Thyroid gland (tissue), 4 donors: ENCODE measurements at regions of chr5 and their contacts with region 1.

Region 1: GRCh38 chr5:157476702-157477408 is 16.8 kb downstream of the NIPAL4 start:
- DNase-seq: peak; percentile 33 to 43
- H3K4me3 ChIP-seq: no peak overlapping the region
- H3K27ac ChIP-seq: no peak overlapping the region
- H3K4me1 ChIP-seq: peaks cover 12 to 15% of the 10 kb centered on the region in 2 donors
- H3K27me3 ChIP-seq: no peaks in the 10 kb centered on the region
- CTCF ChIP-seq: peak; percentile 33 to 88 (median 73)
- POLR2A ChIP-seq: no peak

Region 2: DNA sequence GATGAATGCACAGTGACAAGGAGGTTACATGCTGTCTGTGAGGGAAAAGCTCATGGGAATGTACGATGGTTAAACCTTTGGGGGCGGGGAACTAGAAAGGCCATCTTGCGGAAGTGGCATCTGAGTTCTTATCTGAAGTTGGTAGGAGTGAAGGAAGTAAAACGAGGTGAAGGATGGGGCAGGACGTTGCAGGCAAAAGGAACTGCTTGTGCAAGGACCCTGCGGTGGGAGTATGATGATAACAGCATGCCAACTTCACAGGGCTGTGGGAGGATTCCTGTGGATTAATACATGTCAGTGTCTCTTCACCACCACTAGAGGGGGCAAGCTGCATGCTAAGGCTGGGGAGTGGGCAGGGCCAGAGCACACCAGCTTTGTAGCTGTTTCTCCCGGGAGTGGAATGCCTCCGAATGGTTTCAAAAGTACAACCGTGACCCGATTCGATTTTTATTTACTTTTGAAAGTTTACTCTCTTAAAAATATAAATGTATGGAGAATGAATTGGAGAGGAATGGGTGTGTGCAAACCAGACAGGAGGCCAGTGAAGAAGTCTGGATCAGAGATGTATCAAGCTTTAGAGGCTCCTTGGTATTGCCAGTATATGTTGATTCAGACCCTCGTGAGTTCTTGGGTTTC is 148.5 kb before region 1 on chr5:
- intact Hi-C with region 1: loop called (anchors 5 kb)
- DNase-seq: peak; percentile 66 to 71
- H3K4me3 ChIP-seq: no peak overlapping the region
- H3K27ac ChIP-seq: no peak overlapping the region
- H3K4me1 ChIP-seq: no peaks in the 10 kb centered on the region
- H3K27me3 ChIP-seq: no peaks in the 10 kb centered on the region
- CTCF ChIP-seq: peak; percentile 50 to 93 (median 86)
- POLR2A ChIP-seq: no peak

Region 3: GRCh38 chr5:157366741-157367674 is 109.8 kb before region 1 on chr5:
- intact Hi-C with region 1: loop called (anchors 10 kb)
- DNase-seq: peak; percentile 61 to 63
- H3K4me3 ChIP-seq: no peak overlapping the region
- H3K27ac ChIP-seq: peak overlapping the region; percentile 15 to 54 (median 44)
- H3K4me1 ChIP-seq: peaks cover 6 to 11% of the 10 kb centered on the region in 2 donors
- H3K27me3 ChIP-seq: no peaks in the 10 kb centered on the region
- CTCF ChIP-seq: peak in 4 of 6 experiments; percentile 44 to 67 (median 56)
- POLR2A ChIP-seq: no peak

Region 4: DNA sequence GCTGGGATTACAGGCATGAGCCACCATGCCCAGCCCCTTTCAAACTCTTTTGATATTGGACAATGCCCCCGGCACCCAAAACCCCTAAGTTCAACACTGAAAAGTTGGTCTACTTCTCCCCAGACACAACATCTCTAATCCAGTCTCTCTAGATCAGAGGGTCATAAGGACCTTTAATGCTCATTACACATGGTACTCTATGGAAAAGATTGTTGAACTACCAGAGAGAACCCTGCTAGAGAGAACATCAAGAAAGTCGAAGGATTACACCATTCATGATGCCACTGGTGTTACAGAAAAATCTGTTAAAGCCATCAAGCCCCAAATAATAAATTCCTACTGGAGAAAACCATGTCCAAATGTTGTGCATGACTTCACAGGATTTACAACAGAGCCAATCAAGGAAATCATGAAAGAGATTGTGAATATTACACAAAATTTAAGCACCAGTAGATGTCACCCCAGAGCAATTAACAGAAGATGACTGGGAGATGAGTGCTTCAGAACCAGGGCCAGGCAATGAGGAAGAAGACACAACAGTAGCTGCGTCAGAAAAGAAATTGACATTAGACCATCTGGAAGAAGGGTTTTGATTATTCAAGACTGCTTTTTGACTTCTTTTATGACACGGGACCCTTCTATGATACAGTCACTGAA is 45.2 kb before region 1 on chr5:
- intact Hi-C with region 1: loop called (anchors 2 kb)
- DNase-seq: peak; percentile 20 to 35
- H3K4me3 ChIP-seq: no peak overlapping the region
- H3K27ac ChIP-seq: no peak overlapping the region
- H3K4me1 ChIP-seq: no peaks in the 10 kb centered on the region
- H3K27me3 ChIP-seq: no peaks in the 10 kb centered on the region
- CTCF ChIP-seq: peak in 4 of 6 experiments; percentile 58 to 77 (median 66)
- POLR2A ChIP-seq: no peak

Region 5: DNA sequence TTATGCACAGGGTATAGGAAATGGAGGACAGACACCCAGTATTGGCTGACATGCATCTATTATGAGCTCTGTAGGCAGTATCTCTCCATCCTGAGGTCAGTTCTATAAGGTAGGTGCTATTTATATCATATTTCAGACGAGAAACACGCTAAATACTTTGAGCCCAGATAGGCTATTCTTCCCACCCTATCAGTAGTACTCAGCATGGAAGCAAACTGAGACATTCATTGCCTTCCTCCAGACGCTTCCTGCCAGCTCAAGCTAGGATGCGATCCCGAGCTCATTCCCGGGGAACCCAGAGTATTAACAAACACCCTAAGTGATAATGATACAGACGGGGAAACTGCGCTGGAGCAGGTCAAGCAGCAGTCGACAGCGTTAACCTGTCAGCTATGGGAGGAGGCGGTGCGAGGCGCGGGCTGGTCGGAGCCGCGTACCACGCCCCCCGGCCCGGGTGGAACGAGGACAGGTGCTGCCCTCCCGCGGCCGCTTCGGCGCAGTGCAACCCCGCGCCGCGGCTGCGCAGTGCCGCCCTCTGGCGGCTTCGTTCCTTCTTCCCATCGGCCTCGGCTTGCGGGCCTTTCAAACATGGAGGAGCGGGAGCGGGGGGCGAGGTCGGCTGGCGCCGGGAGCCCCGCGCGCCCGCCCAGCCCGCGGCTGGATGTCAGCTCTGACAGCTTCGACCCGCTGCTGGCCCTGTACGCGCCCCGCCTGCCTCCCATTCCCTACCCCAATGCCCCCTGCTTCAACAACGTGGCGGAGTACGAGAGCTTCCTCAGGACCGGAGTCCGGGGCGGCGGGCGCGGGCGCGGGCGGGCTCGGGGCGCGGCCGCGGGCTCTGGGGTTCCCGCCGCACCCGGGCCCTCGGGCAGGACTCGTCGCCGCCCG is 266.6 kb after region 1 on chr5 and contains the start of gene LSM11:
- intact Hi-C with region 1: loop called (anchors 10 kb)
- DNase-seq: peak; percentile 90 to 91
- H3K4me3 ChIP-seq: peak within 1 kb of the TSS; percentile 19 to 73 (median 58)
- H3K27ac ChIP-seq: no peak within 1 kb of the TSS
- H3K4me1 ChIP-seq: peaks cover 10 to 15% of the 10 kb centered on the region in 2 donors
- H3K27me3 ChIP-seq: no peaks in the 10 kb centered on the region
- CTCF ChIP-seq: peak; percentile 74 to 100 (median 100)
- POLR2A ChIP-seq: peak in 1 of 2 donors; percentile 50
- total RNA-seq, gene LSM11: 2.2 to 4.7 (median 3.8) TPM